ENCODE measurements at regions of chr4 and their contacts with region 1.

Region 1: GRCh38 chr4:127875791-127876190 is 4.9 kb upstream of the PLK4 start:
- DNase-seq: no peak
- ATAC-seq: no peak
- H3K4me3 ChIP-seq: no peak overlapping the region
- H3K4me3 Mint-ChIP-seq: no peak overlapping the region
- H3K27ac ChIP-seq: no peak overlapping the region
- H3K27ac Mint-ChIP-seq: no peak overlapping the region
- H3K4me1 ChIP-seq: peaks cover 12% of the 10 kb centered on the region
- H3K4me1 Mint-ChIP-seq: peaks cover 16% of the 10 kb centered on the region
- H3K27me3 ChIP-seq: no peaks in the 10 kb centered on the region
- H3K27me3 Mint-ChIP-seq: no peaks in the 10 kb centered on the region
- CTCF ChIP-seq: no peak

Region 2: GRCh38 chr4:128271551-128271950 is 395.8 kb after region 1 on chr4:
- CTCF ChIA-PET with region 1: no interaction called
- POLR2A ChIA-PET with region 1: no interaction called
- intact Hi-C with region 1: loop called in 1 of 2 experiments (anchors 5 kb)
- DNase-seq: no peak
- ATAC-seq: no peak
- H3K4me3 ChIP-seq: no peak overlapping the region
- H3K4me3 Mint-ChIP-seq: no peak overlapping the region
- H3K27ac ChIP-seq: no peak overlapping the region
- H3K27ac Mint-ChIP-seq: no peak overlapping the region
- H3K4me1 ChIP-seq: no peaks in the 10 kb centered on the region
- H3K4me1 Mint-ChIP-seq: peaks cover 23% of the 10 kb centered on the region
- H3K27me3 ChIP-seq: no peaks in the 10 kb centered on the region
- H3K27me3 Mint-ChIP-seq: no peaks in the 10 kb centered on the region
- CTCF ChIP-seq: no peak

Measured in CD8-positive, alpha-beta T cell (primary cell).